ENCODE measurements at regions of chr7 and their contacts with region 1.

Region 1: DNA sequence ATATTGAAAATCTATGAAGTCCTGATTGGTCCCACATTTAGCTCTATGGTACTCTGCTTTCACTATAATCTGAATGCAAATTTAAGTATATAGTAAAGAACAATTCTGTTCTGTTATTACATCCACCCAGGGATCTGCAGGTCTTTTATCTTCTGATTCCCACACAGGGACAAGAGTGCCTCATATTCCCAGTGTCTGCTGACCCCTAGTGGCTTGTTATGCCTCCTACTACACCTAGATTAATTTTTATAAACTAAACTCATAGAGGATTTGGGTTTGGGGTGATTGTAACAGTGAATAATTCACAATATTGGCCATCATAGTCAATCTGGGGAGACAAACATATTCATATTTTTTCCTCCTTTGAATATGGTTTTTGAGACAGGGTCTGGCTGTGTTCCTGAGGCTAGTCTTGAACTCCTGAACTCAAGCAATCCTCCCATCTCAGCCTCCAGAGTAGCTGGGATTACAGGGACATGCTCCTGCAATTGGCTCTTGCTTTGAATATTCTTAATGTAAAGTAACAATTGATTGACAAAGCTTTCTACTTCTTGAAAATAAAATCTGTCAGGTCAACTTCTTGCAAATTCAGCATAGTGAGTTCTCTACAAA is 282.1 kb downstream of the KCND2 start:
- DNase-seq: peak; percentile 60
- H3K4me3 Mint-ChIP-seq: no peak overlapping the region
- H3K27ac Mint-ChIP-seq: no peak overlapping the region
- H3K4me1 Mint-ChIP-seq: no peaks in the 10 kb centered on the region
- H3K27me3 Mint-ChIP-seq: peaks cover 76% of the 10 kb centered on the region
- CTCF ChIP-seq: peak; percentile 72

Region 2: GRCh38 chr7:119270045-119270464 is 1285.0 kb before region 1 on chr7:
- CTCF ChIA-PET with region 1: interaction called, 3 read pairs
- POLR2A ChIA-PET with region 1: no interaction called
- intact Hi-C with region 1: loop called (anchors 1 kb)
- DNase-seq: peak; percentile 71
- H3K4me3 Mint-ChIP-seq: no peak overlapping the region
- H3K27ac Mint-ChIP-seq: no peak overlapping the region
- H3K4me1 Mint-ChIP-seq: no peaks in the 10 kb centered on the region
- H3K27me3 Mint-ChIP-seq: peaks cover 57% of the 10 kb centered on the region
- CTCF ChIP-seq: peak; percentile 80

Region 3: DNA sequence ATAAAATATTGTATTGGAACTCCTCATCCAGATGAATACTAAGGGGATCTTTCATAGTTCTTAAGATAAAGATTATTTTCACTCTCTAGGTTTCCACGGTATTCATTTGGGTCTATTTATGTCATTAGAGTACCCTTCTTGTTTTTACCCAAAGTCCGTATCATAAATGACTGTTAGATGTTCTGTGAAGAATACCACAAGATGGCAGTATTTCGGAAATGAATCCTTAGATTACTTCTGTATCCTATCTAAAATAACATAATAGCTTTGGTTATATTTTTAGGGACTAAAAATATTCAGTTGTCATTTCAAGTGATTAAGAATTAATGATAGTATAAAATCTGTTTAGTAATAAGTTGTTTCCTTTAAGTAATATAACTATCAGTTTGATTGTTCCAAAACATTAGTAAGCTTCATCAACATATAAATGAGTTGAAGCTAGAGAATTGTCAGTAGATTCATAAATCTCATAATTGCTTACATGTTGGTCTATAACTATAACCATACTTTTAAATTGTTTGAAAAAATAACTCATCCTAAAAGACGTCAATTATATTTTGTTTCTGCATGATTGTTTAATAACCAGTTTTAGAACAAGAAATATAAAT is 619.5 kb before region 1 on chr7:
- CTCF ChIA-PET with region 1: interaction called, 17 read pairs
- POLR2A ChIA-PET with region 1: no interaction called
- intact Hi-C with region 1: loop called (anchors 1 kb)
- DNase-seq: peak; percentile 46
- H3K4me3 Mint-ChIP-seq: no peak overlapping the region
- H3K27ac Mint-ChIP-seq: no peak overlapping the region
- H3K4me1 Mint-ChIP-seq: no peaks in the 10 kb centered on the region
- H3K27me3 Mint-ChIP-seq: peaks cover 61% of the 10 kb centered on the region
- CTCF ChIP-seq: peak; percentile 26

Region 4: DNA sequence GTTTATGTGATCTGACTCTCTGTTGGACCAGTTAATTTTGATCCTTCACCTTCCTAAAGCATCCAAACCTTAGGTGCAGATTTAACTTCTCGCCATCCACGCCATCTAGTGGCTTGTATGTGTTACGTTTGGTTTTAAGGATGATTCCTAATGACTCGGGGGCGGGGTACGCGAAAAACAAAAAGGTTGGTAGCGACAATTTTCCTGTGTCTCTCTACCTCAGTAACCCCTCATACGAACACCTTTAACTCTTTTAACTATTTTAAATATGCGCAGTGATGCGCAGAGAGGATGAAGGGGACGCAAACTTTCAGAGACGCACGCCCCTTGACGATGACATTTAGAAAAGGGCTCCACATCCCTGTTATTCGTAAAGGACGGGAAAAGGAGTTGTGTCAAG is 282.8 kb before region 1 on chr7:
- CTCF ChIA-PET with region 1: no interaction called
- POLR2A ChIA-PET with region 1: no interaction called
- intact Hi-C with region 1: loop called (anchors 1 kb)
- DNase-seq: peak; percentile 51
- H3K4me3 Mint-ChIP-seq: peak overlapping the region; percentile 43
- H3K27ac Mint-ChIP-seq: no peak overlapping the region
- H3K4me1 Mint-ChIP-seq: no peaks in the 10 kb centered on the region
- H3K27me3 Mint-ChIP-seq: peaks cover 72% of the 10 kb centered on the region
- CTCF ChIP-seq: peak; percentile 57

Region 5: GRCh38 chr7:120337308-120337907 is 217.7 kb before region 1 on chr7:
- CTCF ChIA-PET with region 1: no interaction called
- POLR2A ChIA-PET with region 1: no interaction called
- intact Hi-C with region 1: loop called (anchors 10 kb)
- DNase-seq: peak; percentile 37
- H3K4me3 Mint-ChIP-seq: no peak overlapping the region
- H3K27ac Mint-ChIP-seq: no peak overlapping the region
- H3K4me1 Mint-ChIP-seq: no peaks in the 10 kb centered on the region
- H3K27me3 Mint-ChIP-seq: peaks cover 24% of the 10 kb centered on the region
- CTCF ChIP-seq: peak; percentile 47

Measured in MCF 10A (cell line).